CD4-positive, alpha-beta memory T cell (primary cell): ENCODE measurements at regions of chr12 and their contacts with region 1.

Region 1: GRCh38 chr12:112108201-112109079 is at the start of gene NAA25:
- DNase-seq: peak; percentile 84 to 86 (median 84)
- H3K4me3 ChIP-seq: peak within 1 kb of the TSS; percentile 97 to 99
- H3K4me3 Mint-ChIP-seq: peak within 1 kb of the TSS; percentile 97 to 99 (median 98)
- H3K27ac ChIP-seq: peak within 1 kb of the TSS; percentile 94
- H3K27ac Mint-ChIP-seq: peak within 1 kb of the TSS; percentile 96 to 99 (median 97)
- H3K4me1 ChIP-seq: peaks cover 38% of the 10 kb centered on the region
- H3K4me1 Mint-ChIP-seq: peaks cover 29 to 57% (median 44%) of the 10 kb centered on the region in 4 donors
- H3K27me3 ChIP-seq: no peaks in the 10 kb centered on the region
- H3K27me3 Mint-ChIP-seq: no peaks in the 10 kb centered on the region
- total RNA-seq, gene NAA25: 28.7 to 35.3 TPM

Region 2: GRCh38 chr12:112125250-112125999 is 17.0 kb after region 1 on chr12 and contains the start of gene TRAFD1:
- CTCF ChIA-PET with region 1: interaction called, 20 read pairs
- POLR2A ChIA-PET with region 1: interaction called, 109 read pairs
- intact Hi-C with region 1: loop called (anchors 1 kb)
- DNase-seq: peak; percentile 97 to 99 (median 98)
- H3K4me3 ChIP-seq: peak within 1 kb of the TSS; percentile 63 to 99
- H3K4me3 Mint-ChIP-seq: peak within 1 kb of the TSS; percentile 78 to 93 (median 88)
- H3K27ac ChIP-seq: peak within 1 kb of the TSS; percentile 86
- H3K27ac Mint-ChIP-seq: peak within 1 kb of the TSS; percentile 83 to 95 (median 91)
- H3K4me1 ChIP-seq: peaks cover 52% of the 10 kb centered on the region
- H3K4me1 Mint-ChIP-seq: peaks cover 15 to 50% (median 33%) of the 10 kb centered on the region in 4 donors
- H3K27me3 ChIP-seq: no peaks in the 10 kb centered on the region
- H3K27me3 Mint-ChIP-seq: no peaks in the 10 kb centered on the region
- total RNA-seq, gene TRAFD1: 38.7 to 42.7 TPM

Region 3: DNA sequence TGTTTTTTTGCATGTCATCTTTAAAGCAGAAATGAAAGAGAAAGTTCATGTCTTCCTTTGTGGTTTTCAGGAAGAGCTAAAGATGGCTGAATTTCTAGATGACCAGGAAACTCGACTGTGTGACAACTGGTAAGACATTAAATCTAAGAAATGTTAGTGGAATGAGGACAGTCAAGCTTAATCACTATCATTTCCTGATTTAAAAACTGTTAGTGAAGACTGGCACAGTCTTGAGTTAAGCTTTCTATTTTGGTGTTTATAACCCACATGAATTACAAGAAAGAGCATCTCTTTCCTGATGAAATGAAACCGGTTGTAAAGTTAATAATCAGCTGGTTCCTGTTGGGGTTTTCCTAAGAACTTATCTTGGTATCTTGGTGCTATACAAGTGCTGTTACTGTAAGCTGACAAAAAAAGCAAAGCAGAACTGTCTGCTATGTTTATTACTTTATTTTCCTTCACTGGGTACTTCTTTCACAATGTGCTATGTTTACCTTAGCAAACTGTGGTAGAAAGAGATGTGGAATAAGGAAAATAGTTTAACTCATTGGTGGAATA is 22.1 kb after region 1 on chr12:
- CTCF ChIA-PET with region 1: interaction called, 20 read pairs
- POLR2A ChIA-PET with region 1: interaction called, 109 read pairs
- intact Hi-C with region 1: loop called (anchors 1 kb)
- DNase-seq: peak in 4 of 5 donors; percentile 68 to 82 (median 74)
- H3K4me3 ChIP-seq: peak overlapping the region; percentile 3 to 23
- H3K4me3 Mint-ChIP-seq: peak overlapping the region; percentile 31 to 82 (median 68)
- H3K27ac ChIP-seq: peak overlapping the region; percentile 61
- H3K27ac Mint-ChIP-seq: peak overlapping the region; percentile 66 to 95 (median 84)
- H3K4me1 ChIP-seq: peaks cover 77% of the 10 kb centered on the region
- H3K4me1 Mint-ChIP-seq: peaks cover 28 to 69% (median 53%) of the 10 kb centered on the region in 4 donors
- H3K27me3 ChIP-seq: no peaks in the 10 kb centered on the region
- H3K27me3 Mint-ChIP-seq: no peaks in the 10 kb centered on the region

Region 4: GRCh38 chr12:112153181-112153893 is 44.9 kb after region 1 on chr12:
- CTCF ChIA-PET with region 1: interaction called, 4 read pairs
- POLR2A ChIA-PET with region 1: interaction called, 10 read pairs
- intact Hi-C with region 1: loop called (anchors 1 kb)
- DNase-seq: no peak
- H3K4me3 ChIP-seq: no peak overlapping the region
- H3K4me3 Mint-ChIP-seq: no peak overlapping the region
- H3K27ac ChIP-seq: no peak overlapping the region
- H3K27ac Mint-ChIP-seq: peak overlapping the region in 2 of 7 donors; percentile 9 to 19
- H3K4me1 ChIP-seq: peaks cover 6% of the 10 kb centered on the region
- H3K4me1 Mint-ChIP-seq: peaks cover 12 to 31% (median 15%) of the 10 kb centered on the region in 4 donors
- H3K27me3 ChIP-seq: no peaks in the 10 kb centered on the region
- H3K27me3 Mint-ChIP-seq: no peaks in the 10 kb centered on the region

Region 5: DNA sequence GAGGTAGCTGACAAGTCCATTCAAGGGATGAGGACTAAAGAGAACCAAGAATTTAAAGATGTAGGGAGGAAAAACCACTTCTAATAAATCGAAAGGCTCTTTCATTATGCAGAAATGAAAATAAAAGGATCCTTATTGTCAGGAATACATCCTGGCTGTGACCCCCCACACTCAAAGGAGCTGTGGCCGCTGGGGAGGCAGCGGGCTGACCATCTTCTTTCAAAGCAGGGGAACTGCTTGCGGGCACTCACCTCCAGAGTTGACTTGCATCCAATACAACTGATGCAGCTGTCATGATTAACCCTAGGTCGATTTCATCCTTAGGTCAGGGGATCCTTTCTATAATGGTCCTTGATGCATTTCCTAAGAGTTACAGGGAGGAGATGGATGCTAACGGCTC is 52.2 kb after region 1 on chr12:
- CTCF ChIA-PET with region 1: interaction called, 4 read pairs
- POLR2A ChIA-PET with region 1: interaction called, 10 read pairs
- intact Hi-C with region 1: loop called (anchors 1 kb)
- DNase-seq: no peak
- H3K4me3 ChIP-seq: no peak overlapping the region
- H3K4me3 Mint-ChIP-seq: no peak overlapping the region
- H3K27ac ChIP-seq: no peak overlapping the region
- H3K27ac Mint-ChIP-seq: peak overlapping the region in 6 of 7 donors; percentile 22 to 91 (median 67)
- H3K4me1 ChIP-seq: peaks cover 22% of the 10 kb centered on the region
- H3K4me1 Mint-ChIP-seq: peaks cover 19 to 43% (median 35%) of the 10 kb centered on the region in 4 donors
- H3K27me3 ChIP-seq: no peaks in the 10 kb centered on the region
- H3K27me3 Mint-ChIP-seq: no peaks in the 10 kb centered on the region